Activated CD4-positive, alpha-beta memory T cell treated with anti-CD3 and anti-CD28 coated beads for 36 hours (primary cell): ENCODE measurements at regions of chr21 and their contacts with region 1.

Region 1: DNA sequence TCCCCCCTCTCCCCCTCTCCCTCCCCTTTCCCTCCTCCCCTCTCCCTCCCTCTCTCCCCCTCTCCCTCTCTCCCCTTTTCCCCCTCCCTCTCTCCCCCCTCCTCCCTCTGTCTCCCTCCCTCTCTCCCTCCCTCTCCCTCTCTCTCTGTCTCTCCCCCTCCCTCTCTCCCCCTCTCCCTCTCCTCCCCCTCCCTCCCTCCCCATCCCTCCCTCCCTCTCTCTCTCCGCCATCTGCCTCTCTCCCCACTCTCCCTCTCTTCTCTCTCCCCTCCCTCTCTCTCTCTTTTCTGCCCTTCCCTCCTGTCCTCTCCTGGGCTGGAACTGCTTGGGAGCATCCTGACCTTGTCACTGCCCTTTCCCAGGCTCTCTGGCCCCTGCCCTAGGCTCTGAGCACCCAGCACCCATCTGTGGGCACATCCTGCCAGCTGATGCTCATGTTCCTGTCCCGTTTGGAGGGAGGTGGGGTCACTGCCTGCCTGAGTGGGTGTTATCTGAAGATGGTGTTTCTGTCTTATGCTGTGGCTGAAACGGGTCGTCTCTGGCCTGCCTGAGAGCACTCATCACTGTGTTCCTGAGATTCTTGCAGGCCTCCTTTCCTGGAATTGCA is 10.8 kb downstream of the FTCD start:
- DNase-seq: peak; percentile 36
- H3K4me3 Mint-ChIP-seq: no peak overlapping the region
- H3K27ac Mint-ChIP-seq: peak overlapping the region; percentile 58
- H3K4me1 Mint-ChIP-seq: peaks cover 11% of the 10 kb centered on the region
- H3K27me3 Mint-ChIP-seq: no peaks in the 10 kb centered on the region

Region 2: DNA sequence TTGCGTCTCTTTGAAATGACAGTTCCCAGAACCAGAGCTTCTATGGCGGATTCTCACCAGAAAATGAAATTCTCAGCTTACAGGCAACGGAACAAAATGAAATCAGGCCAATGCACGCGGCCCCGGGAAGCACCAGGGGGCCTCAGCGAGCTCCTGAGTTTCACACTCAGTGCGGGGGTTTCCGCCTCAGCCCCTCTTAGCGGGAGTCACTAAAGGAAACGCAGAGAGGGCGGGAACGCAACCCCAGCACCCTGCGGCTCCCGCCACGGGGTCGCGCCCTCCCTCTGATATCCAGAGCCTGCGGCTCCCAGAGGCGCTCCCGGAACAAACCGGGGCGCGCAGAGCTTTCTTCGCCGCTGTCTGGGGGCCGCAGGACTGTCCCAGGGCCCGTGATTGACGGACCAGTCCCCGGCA is 170.9 kb before region 1 on chr21:
- CTCF ChIA-PET with region 1: interaction called, 30 read pairs
- POLR2A ChIA-PET with region 1: interaction called, 6 read pairs
- intact Hi-C with region 1: loop called (anchors 1 kb)
- DNase-seq: peak; percentile 87
- H3K4me3 Mint-ChIP-seq: peak overlapping the region; percentile 69
- H3K27ac Mint-ChIP-seq: peak overlapping the region; percentile 13
- H3K4me1 Mint-ChIP-seq: peaks cover 11% of the 10 kb centered on the region
- H3K27me3 Mint-ChIP-seq: peaks cover 28% of the 10 kb centered on the region

Region 3: DNA sequence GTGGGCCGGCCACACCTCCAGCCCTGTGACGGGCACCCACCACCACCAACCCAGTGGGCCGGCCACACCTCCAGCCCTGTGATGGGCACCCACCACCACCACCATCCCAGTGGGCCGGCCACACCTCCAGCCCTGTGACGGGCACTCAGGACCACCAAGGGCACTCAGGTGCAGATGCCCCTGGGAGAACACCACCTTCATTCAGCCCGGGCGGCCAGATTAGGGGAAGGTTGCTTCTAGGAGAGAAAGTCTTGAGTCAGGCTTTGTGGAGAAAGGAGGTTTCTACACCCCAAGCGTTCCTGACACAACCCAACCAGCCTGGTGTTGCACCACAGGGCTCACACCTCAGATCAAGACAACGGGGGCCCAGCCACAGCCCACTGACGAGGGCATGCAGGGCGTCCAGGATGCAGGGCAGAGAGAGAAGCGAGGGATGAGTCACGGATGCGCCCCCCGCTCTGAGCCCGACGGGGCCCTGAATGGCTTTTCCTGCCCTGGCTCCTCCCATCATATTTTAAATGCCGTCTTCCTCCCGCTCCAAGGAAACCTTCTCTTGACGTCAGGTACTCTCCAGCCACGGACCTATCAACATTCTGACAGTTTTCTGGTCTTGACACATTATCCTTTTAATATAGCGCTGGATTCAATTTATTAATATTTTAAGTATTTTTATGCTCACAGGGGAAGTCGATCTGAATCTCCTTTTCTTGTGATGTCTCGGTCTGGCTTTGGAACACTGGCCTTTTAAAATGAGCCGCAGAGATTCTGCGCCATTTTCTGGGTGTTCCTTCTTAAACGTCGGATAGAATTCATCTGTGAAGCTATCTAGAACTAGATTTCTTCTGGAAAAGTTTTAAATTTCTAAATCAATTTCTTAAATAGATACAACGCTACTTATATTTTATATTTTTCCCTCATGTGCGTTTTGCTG is 40.3 kb after region 1 on chr21:
- CTCF ChIA-PET with region 1: no interaction called
- POLR2A ChIA-PET with region 1: no interaction called
- intact Hi-C with region 1: loop called (anchors 1 kb)
- DNase-seq: peak; percentile 76
- H3K4me3 Mint-ChIP-seq: peak overlapping the region; percentile 78
- H3K27ac Mint-ChIP-seq: peak overlapping the region; percentile 74
- H3K4me1 Mint-ChIP-seq: peaks cover 10% of the 10 kb centered on the region
- H3K27me3 Mint-ChIP-seq: peaks cover 5% of the 10 kb centered on the region

Region 4: DNA sequence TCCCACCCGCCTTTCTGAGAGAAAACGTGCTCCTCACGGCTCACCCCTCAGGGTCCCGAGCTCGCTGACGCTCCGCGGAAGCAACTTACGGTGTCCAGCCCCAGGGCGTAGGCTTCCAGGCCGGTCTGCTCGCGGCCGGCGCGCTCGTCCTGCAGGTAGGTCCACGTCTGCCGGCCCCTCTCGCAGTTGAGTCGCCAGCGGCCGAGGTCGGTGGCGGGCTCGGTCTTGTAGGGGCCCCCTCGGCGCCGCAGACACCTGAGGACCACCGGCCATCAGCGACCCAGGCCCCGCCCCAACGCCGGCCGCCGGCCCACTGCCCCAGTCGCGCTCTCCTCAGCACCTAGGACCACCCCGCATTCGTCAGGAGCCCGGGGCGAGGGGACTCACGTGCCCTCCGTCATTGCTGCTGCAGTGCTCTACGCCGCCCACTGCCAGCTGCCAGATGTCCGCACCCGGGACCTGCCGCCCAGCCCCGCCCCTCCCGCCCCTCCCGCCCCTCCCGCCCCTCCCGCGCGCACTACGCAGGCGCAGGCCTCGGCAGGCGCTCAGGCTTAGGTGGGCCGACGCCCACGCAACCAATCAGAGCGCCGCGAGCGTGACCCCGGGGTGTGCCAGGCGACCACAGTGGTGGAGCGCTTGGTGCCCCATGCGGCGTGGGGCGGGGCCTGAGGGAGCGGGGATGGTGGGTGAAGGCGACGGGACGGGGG is 83.9 kb after region 1 on chr21 and contains the start of gene LSS:
- CTCF ChIA-PET with region 1: interaction called, 16 read pairs
- POLR2A ChIA-PET with region 1: interaction called, 6 read pairs
- intact Hi-C with region 1: loop called (anchors 2 kb)
- DNase-seq: peak; percentile 97
- H3K4me3 Mint-ChIP-seq: peak within 1 kb of the TSS; percentile 85
- H3K27ac Mint-ChIP-seq: peak within 1 kb of the TSS; percentile 70
- H3K4me1 Mint-ChIP-seq: peaks cover 35% of the 10 kb centered on the region
- H3K27me3 Mint-ChIP-seq: no peaks in the 10 kb centered on the region
- total RNA-seq, gene LSS: 22.7 to 22.8 TPM

Region 5: DNA sequence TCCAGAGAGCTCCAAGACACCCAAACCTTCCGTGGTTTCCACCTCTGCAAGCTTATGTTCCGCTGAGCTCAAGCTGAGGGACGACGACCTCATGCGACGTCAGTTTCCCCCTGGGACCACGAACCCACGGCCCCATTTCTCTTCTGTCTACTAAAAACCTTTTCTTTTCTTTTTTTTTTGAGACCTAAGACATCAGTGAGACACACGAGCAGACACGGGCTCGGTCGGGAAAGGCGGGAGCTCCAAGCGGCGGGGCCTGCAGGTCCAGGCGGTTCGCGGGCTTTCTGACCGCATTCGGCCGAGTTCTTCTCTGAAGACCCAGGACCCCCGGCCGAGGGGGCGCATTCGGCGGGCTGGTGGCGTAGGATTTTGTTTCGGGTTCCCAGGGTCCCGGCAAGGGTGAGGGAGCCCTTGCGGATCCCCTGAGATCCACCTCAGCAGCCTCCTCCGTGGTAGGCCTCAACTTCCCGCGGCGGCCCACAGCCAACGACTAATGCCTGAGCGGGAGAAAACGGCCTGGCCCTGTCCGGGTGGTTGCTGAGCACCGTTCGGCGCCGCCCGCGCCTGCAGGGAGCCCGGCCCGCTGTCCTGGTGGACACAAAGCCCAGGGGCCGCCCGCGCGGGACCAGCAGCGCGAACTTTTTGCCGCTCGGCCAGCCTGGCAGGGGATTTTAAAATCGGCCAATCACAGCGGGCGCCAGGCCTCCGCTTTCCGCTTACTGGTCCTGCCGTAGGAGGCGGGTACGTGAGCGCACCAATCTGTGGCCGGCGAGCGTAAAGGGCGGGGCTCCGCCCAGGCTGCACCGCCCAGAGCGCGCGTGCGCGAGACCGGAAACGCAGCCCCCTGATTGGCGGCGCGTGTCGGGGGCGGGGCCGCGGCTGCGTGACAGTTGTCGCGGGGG is 178.9 kb after region 1 on chr21 and contains the start of gene C21orf58:
- CTCF ChIA-PET with region 1: interaction called, 8 read pairs
- POLR2A ChIA-PET with region 1: no interaction called
- intact Hi-C with region 1: loop called (anchors 2 kb)
- DNase-seq: peak; percentile 98
- H3K4me3 Mint-ChIP-seq: peak within 1 kb of the TSS; percentile 90
- H3K27ac Mint-ChIP-seq: peak within 1 kb of the TSS; percentile 95
- H3K4me1 Mint-ChIP-seq: peaks cover 30% of the 10 kb centered on the region
- H3K27me3 Mint-ChIP-seq: no peaks in the 10 kb centered on the region
- total RNA-seq, gene C21orf58: 25.8 to 28.1 TPM

Region 6: GRCh38 chr21:46458315-46459023 is 313.9 kb after region 1 on chr21 and contains the start of gene DIP2A:
- CTCF ChIA-PET with region 1: interaction called, 6 read pairs
- POLR2A ChIA-PET with region 1: no interaction called
- intact Hi-C with region 1: loop called (anchors 5 kb)
- DNase-seq: peak; percentile 96
- H3K4me3 Mint-ChIP-seq: peak within 1 kb of the TSS; percentile 90
- H3K27ac Mint-ChIP-seq: peak within 1 kb of the TSS; percentile 81
- H3K4me1 Mint-ChIP-seq: peaks cover 42% of the 10 kb centered on the region
- H3K27me3 Mint-ChIP-seq: no peaks in the 10 kb centered on the region
- total RNA-seq, gene DIP2A: 32.0 to 35.3 TPM